Pancreas (tissue), 10 donors: ENCODE measurements at regions of chr3 and their contacts with region 1.

Region 1: GRCh38 chr3:151146071-151146730 is 56.8 kb downstream of the GPR171 start:
- DNase-seq: peak; percentile 52 to 80 (median 59)
- ATAC-seq: peak; percentile 93 to 100 (median 99)
- H3K4me3 ChIP-seq: no peak overlapping the region
- H3K27ac ChIP-seq: no peak overlapping the region
- H3K4me1 ChIP-seq: peaks cover 0 to 5% (median 0%) of the 10 kb centered on the region in 3 donors
- H3K27me3 ChIP-seq: no peaks in the 10 kb centered on the region
- CTCF ChIP-seq: peak; percentile 75 to 85 (median 82)

Region 2: DNA sequence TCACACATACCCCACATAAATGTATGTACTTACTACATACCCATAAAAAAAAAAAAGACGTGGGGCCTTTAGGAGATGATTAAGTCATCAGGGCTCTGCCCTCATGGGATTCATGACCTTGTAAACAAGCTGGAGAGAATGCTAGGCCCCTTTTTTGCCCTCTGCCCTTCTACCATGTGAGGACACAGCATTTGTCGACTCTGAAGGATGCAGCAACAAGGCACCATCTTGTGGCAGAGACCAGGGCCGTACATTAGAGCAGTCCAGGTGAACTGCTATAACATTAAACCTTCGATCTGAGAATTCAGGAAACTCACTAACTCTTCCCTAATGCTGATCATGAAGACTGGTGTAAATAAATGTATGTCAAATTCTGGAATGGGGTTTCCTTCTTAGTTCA is 352.6 kb before region 1 on chr3:
- intact Hi-C with region 1: loop called in 2 of 3 experiments (anchors 5 to 10 kb)
- DNase-seq: no peak
- ATAC-seq: no peak
- H3K4me3 ChIP-seq: no peak overlapping the region
- H3K27ac ChIP-seq: no peak overlapping the region
- H3K4me1 ChIP-seq: peaks cover 0 to 8% (median 3%) of the 10 kb centered on the region in 3 donors
- H3K27me3 ChIP-seq: no peaks in the 10 kb centered on the region
- CTCF ChIP-seq: no peak

Region 3: DNA sequence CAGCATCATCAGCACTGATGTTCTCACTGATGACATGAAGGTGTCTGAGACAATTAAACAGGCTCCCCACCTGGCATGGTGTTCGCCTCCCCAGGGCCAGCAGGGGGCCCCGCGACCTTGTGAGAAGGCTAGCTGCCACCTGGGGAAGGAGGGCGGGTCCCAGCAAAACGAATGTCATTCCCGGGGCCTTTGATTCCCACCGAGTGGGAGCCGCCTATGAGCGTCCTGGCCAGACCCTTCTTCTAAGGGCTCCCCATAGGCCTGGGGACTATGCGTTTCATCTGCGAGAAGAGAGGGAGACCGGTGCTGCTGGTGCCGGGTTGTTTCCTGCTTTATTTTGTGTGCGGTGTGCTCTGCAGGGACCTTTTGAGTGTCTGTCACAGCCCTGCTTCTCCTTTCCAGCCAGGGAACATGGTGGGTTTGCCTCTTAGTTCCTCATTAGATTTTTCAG is 220.4 kb before region 1 on chr3:
- intact Hi-C with region 1: loop called in 2 of 3 experiments (anchors 5 to 10 kb)
- DNase-seq: peak; percentile 6 to 79 (median 40)
- ATAC-seq: peak; percentile 68 to 91 (median 88)
- H3K4me3 ChIP-seq: no peak overlapping the region
- H3K27ac ChIP-seq: no peak overlapping the region
- H3K4me1 ChIP-seq: no peaks in the 10 kb centered on the region
- H3K27me3 ChIP-seq: no peaks in the 10 kb centered on the region
- CTCF ChIP-seq: peak in 3 of 4 donors; percentile 47 to 50 (median 50)